IMR-90 (cell line): ENCODE measurements at regions of chr7 and their contacts with region 1.

Region 1: DNA sequence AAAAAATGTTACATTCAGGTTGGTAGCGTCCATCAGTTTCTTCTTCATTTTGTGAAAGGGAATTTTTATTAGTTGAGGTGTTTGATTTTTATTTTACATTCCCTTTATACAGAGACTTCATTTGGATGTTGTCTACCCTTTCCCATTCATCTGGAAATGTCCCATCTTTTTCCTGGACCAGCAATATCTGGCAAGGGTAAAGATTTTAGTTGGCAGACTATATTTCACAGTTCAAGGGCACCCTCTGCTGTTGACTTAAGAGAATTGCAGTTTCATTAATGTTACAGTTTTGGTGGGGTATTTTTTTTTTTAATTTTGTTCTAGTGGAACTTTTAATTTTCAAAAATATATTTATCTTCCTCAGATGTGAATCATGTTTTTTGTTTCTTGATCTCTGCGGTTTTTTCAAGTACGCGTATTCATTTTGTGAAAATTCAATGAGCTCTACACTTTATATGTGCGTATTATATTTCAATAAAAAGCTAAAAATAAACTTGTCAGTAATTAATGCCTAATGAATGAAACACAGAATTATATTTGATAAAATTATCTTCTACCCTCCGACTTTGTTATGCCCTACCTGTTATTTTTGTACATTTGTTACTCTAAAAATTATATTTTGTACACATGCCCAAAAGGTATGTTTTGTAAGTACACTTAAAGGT is 97.9 kb upstream of the KLF14 start:
- DNase-seq: peak; percentile 67
- ATAC-seq: peak; percentile 66
- H3K4me3 ChIP-seq: no peak overlapping the region
- H3K27ac ChIP-seq: no peak overlapping the region
- H3K4me1 ChIP-seq: peaks cover 2% of the 10 kb centered on the region; the same call in 1 of the 2 replicates
- H3K27me3 ChIP-seq: no peaks in the 10 kb centered on the region
- CTCF ChIP-seq: peak; percentile 81
- POLR2A ChIP-seq: no peak
- RAD21 ChIP-seq: peak; percentile 76

Region 2: DNA sequence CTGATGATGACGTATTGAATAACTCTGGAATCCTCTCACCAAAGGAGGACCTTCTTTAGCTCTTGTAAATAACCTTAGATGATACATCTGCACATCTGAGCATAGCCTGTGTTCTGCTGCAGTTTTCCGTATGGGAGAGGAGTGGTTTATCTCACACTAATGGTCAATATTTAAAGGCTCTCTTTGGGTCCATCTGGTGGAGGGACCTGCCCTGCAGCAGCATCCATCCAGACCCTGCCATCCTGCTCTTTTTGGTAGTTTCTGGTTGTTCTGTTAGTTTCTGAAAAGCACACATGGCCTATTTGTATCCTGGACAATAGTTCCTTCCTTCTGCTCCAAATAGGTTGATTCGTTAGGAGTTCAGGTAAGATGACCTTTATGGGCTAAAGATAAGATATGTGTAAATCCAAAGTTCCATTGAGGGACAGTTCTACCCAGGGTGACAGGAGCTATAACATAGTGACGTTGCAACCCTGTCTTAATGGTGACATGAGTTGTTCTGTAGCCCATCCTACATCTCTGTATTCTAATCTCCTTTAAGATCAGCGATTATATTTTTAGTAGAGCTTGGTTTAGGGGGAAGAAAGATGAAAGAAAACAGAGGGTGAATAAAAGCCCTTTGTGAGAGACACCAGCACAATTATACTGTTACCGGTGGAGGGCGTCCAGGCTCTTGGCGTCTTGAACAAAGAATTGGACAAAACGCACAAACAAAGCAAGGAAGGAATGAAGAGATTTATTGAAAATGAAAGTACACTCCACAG is 37.9 kb before region 1 on chr7:
- CTCF ChIA-PET with region 1: no interaction called
- POLR2A ChIA-PET with region 1: no interaction called
- dilution Hi-C with region 1: no loop called
- in situ Hi-C with region 1: no loop called
- intact Hi-C with region 1: loop called (anchors 2 kb)
- DNase-seq: peak; percentile 22
- ATAC-seq: peak; percentile 76
- H3K4me3 ChIP-seq: peak overlapping the region; percentile 10; the same call in 1 of the 2 replicates
- H3K27ac ChIP-seq: no peak overlapping the region
- H3K4me1 ChIP-seq: no peaks in the 10 kb centered on the region
- H3K27me3 ChIP-seq: peaks cover 6% of the 10 kb centered on the region
- CTCF ChIP-seq: peak; percentile 25; the same call in 1 of the 2 replicates
- POLR2A ChIP-seq: no peak
- RAD21 ChIP-seq: no peak; the same call in 1 of the 2 replicates

Region 3: DNA sequence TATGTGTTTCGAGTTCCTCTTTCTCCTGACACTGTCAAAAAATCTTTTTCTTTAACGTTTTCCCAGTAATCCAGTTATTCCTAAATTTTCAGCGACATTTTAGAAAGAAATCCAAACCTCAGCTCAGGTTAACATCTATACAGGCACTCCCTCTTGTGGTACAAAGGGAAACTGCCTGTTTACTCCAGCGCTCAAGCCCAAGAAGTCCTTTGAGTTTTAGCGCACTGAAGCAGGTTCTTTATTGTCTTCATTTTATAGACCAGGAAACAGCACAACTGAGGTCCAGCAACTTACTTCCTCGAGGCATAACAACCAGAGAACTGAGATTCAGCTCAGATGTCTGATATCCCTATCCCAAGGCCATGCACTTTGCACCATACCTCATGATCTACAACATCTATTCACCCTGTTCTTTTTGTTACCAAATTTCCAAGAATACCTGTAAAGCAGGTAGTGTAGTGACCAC is 208.6 kb after region 1 on chr7:
- CTCF ChIA-PET with region 1: no interaction called
- POLR2A ChIA-PET with region 1: no interaction called
- dilution Hi-C with region 1: no loop called
- in situ Hi-C with region 1: no loop called
- intact Hi-C with region 1: no loop called
- DNase-seq: peak; percentile 77
- ATAC-seq: peak; percentile 85
- H3K4me3 ChIP-seq: no peak overlapping the region
- H3K27ac ChIP-seq: no peak overlapping the region
- H3K4me1 ChIP-seq: peaks cover 11% of the 10 kb centered on the region
- H3K27me3 ChIP-seq: no peaks in the 10 kb centered on the region
- CTCF ChIP-seq: peak; percentile 88
- POLR2A ChIP-seq: no peak
- RAD21 ChIP-seq: peak; percentile 91